ENCODE measurements at regions of chr12 and their contacts with region 1.

Region 1: GRCh38 chr12:126784328-126784921 is 1482.5 kb upstream of the TMEM132C start:
- DNase-seq: peak; percentile 39
- ATAC-seq: peak in 1 of 2 donors; percentile 38

Region 2: GRCh38 chr12:126617312-126617711 is 167.1 kb before region 1 on chr12:
- intact Hi-C with region 1: no loop called
- DNase-seq: no peak
- ATAC-seq: no peak

Region 3: DNA sequence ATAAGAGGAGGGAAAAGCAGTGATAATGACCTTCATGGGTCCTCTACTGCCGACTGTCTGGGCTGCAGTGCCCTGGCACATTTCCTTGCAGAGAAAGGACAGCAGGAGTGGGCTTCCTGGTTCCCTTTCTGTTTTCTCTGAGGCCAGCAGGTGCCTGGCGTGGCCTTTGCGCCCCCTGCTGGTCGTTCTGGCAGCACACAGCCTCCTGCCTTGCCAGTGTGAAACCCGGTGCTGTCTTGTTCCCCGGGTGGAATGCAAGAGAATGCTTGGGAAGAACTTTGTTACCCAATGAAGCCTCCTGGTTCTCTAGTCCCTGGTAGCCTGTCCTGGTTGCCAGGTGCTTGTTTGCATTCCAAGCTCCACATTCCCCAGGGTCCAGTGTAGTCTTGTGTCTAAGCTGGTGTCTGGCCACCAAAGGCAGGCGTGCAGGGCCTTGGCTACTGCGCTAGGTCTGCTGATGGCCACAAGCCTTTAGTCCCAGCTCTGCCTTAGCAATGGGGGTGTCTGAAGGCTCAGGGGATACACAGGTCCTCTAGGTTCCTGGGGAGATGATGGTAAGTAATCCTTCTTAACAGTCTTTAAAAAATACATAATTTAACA is 90.1 kb after region 1 on chr12:
- intact Hi-C with region 1: loop called (anchors 10 kb)
- DNase-seq: peak; percentile 63
- ATAC-seq: peak in 1 of 2 donors; percentile 80

Region 4: DNA sequence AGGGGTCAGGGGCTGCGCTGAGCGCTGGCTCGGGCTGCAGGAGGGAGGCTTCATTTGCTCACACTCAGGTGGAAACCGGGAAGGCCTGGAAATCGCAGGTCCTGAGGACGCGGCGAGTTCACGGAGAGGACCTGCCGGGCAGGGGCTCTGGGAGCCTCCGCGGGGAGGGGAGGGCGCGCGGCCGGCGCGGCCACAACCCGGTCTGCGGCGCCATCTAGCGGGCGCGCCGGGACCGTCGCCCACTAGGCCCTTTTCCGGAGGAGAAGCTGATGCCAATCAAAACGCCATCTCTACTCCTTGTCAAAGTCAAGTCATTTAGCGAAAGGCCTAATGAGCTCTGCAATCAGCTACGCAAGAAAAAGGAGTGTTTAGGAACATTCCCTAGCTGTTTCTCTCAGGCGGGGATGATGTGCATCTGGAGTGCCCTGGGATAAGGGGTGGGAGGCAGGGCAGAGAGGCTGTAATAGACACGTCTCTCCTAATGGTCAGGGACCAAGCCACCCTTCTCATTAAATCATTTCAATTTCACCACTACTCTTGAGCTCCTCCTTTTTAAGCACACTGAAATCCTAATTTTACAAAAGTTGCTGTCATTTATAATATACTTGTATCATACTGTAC is 596.7 kb after region 1 on chr12:
- intact Hi-C with region 1: loop called in 1 of 2 experiments (anchors 5 kb)
- DNase-seq: peak; percentile 39
- ATAC-seq: peak; percentile 71 to 77

Region 5: GRCh38 chr12:127696963-127697362 is 912.5 kb after region 1 on chr12:
- intact Hi-C with region 1: no loop called
- DNase-seq: no peak
- ATAC-seq: peak in 1 of 2 donors; percentile 29